ENCODE measurements at regions of chr11 and their contacts with region 1.

Region 1: GRCh38 chr11:26297189-26297975 is 34.5 kb upstream of the ANO3 start:
- ATAC-seq: peak; percentile 90 to 100 (median 100)
- H3K4me3 ChIP-seq: no peak overlapping the region
- H3K27ac ChIP-seq: no peak overlapping the region
- H3K4me1 ChIP-seq: peaks cover 0 to 2% of the 10 kb centered on the region in 2 donors

Region 2: GRCh38 chr11:26551186-26551801 is 253.9 kb after region 1 on chr11:
- in situ Hi-C with region 1: loop called in 2 of 9 experiments (anchors 10 kb)
- ATAC-seq: peak in 1 of 8 experiments; percentile 23
- H3K4me3 ChIP-seq: no peak overlapping the region
- H3K27ac ChIP-seq: no peak overlapping the region
- H3K4me1 ChIP-seq: no peaks in the 10 kb centered on the region

Region 3: GRCh38 chr11:26649884-26650283 is 352.5 kb after region 1 on chr11:
- in situ Hi-C with region 1: loop called in 2 of 9 experiments (anchors 10 to 25 kb)
- ATAC-seq: peak; percentile 72 to 100 (median 86)
- H3K4me3 ChIP-seq: no peak overlapping the region
- H3K27ac ChIP-seq: no peak overlapping the region
- H3K4me1 ChIP-seq: no peaks in the 10 kb centered on the region

Measured in motor neuron (in vitro differentiated cells).